Activated CD4-positive, alpha-beta memory T cell treated with anti-CD3 and anti-CD28 coated beads for 36 hours (primary cell): ENCODE measurements at regions of chr11 and their contacts with region 1.

Region 1: GRCh38 chr11:119144825-119145486 is 3.9 kb upstream of the ABCG4 start:
- DNase-seq: peak; percentile 54
- H3K4me3 Mint-ChIP-seq: no peak overlapping the region
- H3K27ac Mint-ChIP-seq: no peak overlapping the region
- H3K4me1 Mint-ChIP-seq: peaks cover 7% of the 10 kb centered on the region
- H3K27me3 Mint-ChIP-seq: peaks cover 24% of the 10 kb centered on the region

Region 2: DNA sequence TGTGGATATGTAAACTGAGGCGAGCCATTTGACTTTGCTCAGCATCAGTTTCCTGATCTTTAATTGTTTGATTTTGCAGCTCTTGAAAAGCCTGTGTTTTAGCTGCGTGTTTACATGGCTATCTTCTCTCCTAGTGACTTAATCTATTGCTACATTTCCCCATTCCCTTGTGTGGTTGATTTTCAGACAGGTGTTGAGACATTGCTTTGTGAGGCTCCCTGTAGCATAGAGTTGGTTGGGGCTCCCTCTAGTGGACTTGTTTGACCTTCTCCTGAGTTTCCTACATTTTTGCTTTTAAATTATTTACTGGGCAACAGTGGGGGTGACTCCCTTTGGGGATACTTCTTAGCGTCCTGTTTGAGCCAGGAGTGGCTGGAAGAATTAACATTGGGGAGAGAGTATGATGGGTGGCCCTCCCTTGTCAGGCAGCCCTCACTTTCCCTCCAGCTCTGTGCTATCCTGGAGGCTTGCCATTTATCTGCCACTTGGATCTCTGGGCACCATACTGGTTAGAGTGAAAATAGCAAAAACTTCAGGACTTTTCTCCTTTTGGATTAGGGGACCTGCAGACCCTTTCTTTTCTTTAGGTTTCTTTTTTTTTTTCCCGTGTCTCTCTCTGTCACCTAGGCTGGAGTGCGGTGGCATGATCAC is 52.0 kb after region 1 on chr11:
- CTCF ChIA-PET with region 1: interaction called, 6 read pairs
- POLR2A ChIA-PET with region 1: no interaction called
- intact Hi-C with region 1: loop called (anchors 2 kb)
- DNase-seq: peak; percentile 72
- H3K4me3 Mint-ChIP-seq: no peak overlapping the region
- H3K27ac Mint-ChIP-seq: no peak overlapping the region
- H3K4me1 Mint-ChIP-seq: peaks cover 3% of the 10 kb centered on the region
- H3K27me3 Mint-ChIP-seq: no peaks in the 10 kb centered on the region